ENCODE measurements at regions of chr7 and their contacts with region 1.

Region 1: DNA sequence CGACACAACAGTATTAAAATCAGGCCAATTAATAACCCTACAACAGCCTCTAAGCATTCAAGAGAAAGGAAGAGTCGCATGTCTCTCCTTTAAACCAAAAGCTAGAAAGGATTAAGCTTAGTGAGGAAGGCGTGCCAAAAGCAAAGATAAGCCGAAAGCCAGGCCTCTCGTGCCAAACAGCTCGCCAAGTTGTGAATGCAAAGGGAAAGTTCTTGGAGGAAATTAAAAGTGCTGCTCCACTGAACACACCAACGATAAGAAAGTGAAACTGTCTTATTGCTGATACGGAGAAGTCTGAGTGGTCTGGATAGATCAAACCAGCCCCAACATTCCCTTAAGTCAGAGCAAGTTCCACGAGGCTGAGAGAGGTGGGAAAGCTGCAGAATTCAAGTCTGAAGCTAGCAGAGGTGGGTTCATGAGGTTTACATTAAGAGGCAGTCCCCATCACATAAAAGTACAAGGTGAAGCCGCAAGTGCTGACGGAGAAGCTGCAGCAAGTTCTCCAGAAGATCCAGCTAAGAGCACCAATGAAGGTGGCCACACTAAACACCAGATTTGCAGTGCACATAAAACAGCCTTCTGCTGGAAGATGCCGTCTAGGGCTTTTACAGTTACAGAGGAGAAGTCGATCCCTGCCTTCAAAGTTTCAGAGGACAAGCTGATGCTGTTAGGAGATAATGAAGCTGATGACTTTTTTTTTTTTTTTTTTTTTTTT is 194.8 kb downstream of the MAD1L1 start:
- DNase-seq: peak; percentile 80
- ATAC-seq: peak; percentile 81
- H3K4me3 ChIP-seq: peak overlapping the region; percentile 39
- H3K27ac ChIP-seq: peak overlapping the region; percentile 56; the same call in 1 of the 2 replicates
- H3K4me1 ChIP-seq: peaks cover 5% of the 10 kb centered on the region
- H3K27me3 ChIP-seq: no peaks in the 10 kb centered on the region
- CTCF ChIP-seq: no peak
- POLR2A ChIP-seq: peak; percentile 53; the same call in 1 of the 2 replicates
- RAD21 ChIP-seq: no peak

Region 2: DNA sequence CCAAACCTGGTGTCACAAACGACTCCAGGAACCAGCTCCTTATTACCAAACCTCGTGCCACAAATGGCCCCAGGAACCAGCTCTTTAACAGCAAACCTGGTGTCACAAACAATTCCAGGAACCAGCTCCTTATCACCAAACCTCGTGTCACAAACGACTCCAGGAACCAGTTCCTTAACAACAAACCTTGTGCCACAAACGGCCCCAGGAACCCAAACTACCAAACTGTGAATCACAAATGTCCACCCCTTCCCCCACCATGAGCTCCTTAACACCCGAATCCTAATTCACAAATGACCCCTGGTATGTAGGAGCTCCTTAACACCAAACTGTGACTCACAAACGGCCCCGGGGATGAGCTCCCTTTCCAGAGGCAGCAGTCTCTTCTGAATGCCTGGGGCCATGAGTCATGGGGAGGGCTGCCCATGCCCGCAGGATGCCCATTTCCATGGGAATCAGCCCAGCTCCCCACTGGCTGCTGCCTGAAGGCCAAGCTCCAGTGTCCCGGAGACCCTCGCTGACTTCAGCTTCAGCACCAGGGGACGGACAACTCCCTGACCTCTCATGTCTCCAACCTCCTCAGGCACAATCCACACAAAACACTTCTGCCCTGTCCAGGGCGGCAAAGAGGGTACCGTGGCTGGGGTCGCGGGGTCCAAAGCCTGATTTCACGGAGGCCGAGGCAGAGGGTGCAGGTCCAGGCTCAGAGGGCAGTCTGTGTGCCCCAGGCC is 154.8 kb before region 1 on chr7:
- CTCF ChIA-PET with region 1: no interaction called
- POLR2A ChIA-PET with region 1: interaction called, 10 read pairs
- dilution Hi-C with region 1: no loop called
- in situ Hi-C with region 1: no loop called
- intact Hi-C with region 1: no loop called
- DNase-seq: peak; percentile 82
- ATAC-seq: peak; percentile 97
- H3K4me3 ChIP-seq: no peak overlapping the region
- H3K27ac ChIP-seq: no peak overlapping the region; the same call in 1 of the 2 replicates
- H3K4me1 ChIP-seq: peaks cover 17% of the 10 kb centered on the region
- H3K27me3 ChIP-seq: no peaks in the 10 kb centered on the region
- CTCF ChIP-seq: no peak
- POLR2A ChIP-seq: no peak
- RAD21 ChIP-seq: no peak

Region 3: DNA sequence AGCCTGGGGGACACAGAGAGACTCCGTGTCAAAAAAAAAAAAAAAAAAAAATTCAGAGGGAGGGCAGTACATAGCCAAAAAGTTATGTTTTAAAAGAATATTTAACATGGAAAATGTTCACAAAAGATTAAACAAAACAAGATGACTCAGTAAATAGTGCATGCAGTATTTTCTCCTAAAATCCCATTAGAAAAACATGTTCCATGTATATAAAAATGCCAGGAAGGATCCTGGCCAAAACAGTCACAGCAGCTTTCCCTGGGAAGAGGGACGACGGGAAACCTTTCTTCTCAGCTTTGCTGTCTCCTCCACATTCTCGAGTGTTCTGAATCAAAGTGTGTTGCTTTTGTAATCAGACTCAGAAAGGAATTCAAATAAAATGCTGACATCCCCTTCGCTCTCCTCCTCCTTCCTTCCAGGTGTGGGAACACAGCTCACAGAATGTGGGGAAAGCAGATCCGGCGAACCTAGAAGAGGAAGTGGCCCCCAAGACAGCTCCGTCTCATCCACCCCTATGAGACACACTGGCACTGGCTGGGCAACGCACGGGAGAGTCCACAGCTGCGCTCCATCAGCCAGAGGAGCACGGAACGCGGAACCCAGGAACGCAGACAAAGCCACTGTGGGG is 55.4 kb after region 1 on chr7:
- CTCF ChIA-PET with region 1: no interaction called
- POLR2A ChIA-PET with region 1: no interaction called
- dilution Hi-C with region 1: no loop called
- in situ Hi-C with region 1: no loop called
- intact Hi-C with region 1: loop called (anchors 5 kb)
- DNase-seq: peak; percentile 38
- ATAC-seq: peak; percentile 69
- H3K4me3 ChIP-seq: no peak overlapping the region
- H3K27ac ChIP-seq: peak overlapping the region; percentile 35; the same call in 1 of the 2 replicates
- H3K4me1 ChIP-seq: peaks cover 6% of the 10 kb centered on the region
- H3K27me3 ChIP-seq: no peaks in the 10 kb centered on the region
- CTCF ChIP-seq: no peak
- POLR2A ChIP-seq: no peak
- RAD21 ChIP-seq: no peak

Measured in IMR-90 (cell line).